Aorta (tissue), 5 donors: ENCODE measurements at regions of chr2 and their contacts with region 1.

Region 1: DNA sequence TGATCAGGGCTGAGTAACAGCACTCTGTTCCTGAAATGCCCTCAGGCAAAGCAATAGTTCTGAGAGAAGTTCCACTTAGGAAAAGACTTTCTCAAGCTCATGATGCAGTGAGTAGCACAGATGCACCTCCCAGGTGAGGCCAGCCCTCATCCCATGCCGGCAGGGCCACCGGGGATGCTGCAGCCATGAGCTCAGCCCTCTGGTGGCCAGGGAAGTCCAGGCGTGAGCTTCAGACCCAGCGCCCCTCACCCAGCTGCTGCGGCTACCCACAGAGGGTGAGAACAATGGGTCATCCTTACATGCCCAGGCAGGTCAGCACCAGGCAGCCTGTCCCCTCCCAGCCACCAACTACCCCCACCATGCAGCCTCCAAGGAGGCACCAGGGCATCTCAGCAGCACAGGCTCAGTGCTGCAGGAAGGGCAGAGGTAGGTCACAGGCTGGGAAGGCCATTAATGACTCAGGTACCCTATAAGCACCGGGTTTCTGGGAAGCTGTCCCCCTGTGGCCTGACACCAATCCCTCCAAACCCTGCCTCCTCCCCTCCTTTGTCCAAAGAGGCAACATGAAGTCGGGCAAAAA is 50.6 kb downstream of the TTC32 start:
- DNase-seq: no peak
- ATAC-seq: no peak
- H3K4me3 ChIP-seq: no peak overlapping the region
- H3K27ac ChIP-seq: no peak overlapping the region
- H3K4me1 ChIP-seq: peaks cover 0 to 4% of the 10 kb centered on the region in 2 donors
- H3K27me3 ChIP-seq: no peaks in the 10 kb centered on the region

Region 2: GRCh38 chr2:19554520-19554919 is 296.7 kb before region 1 on chr2:
- intact Hi-C with region 1: loop called in 1 of 2 experiments (anchors 10 kb)
- DNase-seq: no peak
- ATAC-seq: no peak
- H3K4me3 ChIP-seq: no peak overlapping the region
- H3K27ac ChIP-seq: no peak overlapping the region
- H3K4me1 ChIP-seq: peaks cover 0 to 12% of the 10 kb centered on the region in 2 donors
- H3K27me3 ChIP-seq: no peaks in the 10 kb centered on the region

Region 3: DNA sequence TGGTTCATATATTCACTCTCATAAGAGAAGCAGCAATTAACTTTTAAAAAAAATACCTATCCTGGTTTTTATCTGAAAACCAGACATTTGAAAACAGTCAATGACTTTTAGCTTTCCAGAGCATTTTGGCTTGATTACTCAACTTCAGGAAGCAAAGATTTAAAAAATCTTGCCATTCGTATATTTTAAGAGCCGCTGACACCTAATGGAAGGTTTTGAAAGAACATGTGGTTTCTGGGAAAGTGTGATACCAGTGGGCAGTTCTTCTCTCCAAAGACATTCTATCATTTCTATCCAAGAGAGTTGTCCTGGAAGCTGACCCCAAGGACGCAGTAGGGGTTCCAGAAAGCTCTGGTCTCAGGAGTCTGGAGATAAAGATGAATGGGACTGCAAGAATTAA is 184.1 kb before region 1 on chr2:
- intact Hi-C with region 1: loop called (anchors 5 to 10 kb)
- DNase-seq: no peak
- ATAC-seq: no peak
- H3K4me3 ChIP-seq: no peak overlapping the region
- H3K27ac ChIP-seq: no peak overlapping the region
- H3K4me1 ChIP-seq: peaks cover 0 to 2% of the 10 kb centered on the region in 2 donors
- H3K27me3 ChIP-seq: no peaks in the 10 kb centered on the region

Region 4: DNA sequence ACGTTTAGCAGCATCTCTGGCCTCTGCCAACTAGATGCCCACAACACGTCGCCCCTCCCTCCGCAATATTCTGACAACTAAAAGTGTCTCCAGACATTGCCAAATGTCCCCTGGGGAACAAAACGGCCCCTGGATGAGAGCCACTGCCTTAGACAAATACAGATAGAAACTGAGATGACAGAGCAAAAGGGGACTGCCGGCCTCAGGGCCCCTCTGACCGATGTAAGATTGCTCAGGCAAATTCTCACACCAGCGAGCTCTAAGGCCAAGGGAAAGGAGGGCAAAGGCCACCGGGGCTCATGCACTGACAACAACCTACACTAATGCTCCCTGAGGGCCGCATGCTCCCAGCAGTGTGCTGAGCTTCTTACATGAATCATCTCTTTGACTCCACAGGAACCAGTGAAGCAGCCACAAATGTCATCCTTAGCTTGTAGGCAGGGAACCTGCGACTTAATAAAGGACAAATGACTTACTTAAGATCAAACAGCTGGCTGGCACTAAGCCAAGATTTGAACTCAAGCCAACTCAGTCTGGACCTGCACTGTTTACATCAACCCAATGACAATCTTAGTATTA is 177.9 kb before region 1 on chr2:
- intact Hi-C with region 1: loop called (anchors 5 to 10 kb)
- DNase-seq: no peak
- ATAC-seq: no peak
- H3K4me3 ChIP-seq: no peak overlapping the region
- H3K27ac ChIP-seq: no peak overlapping the region
- H3K4me1 ChIP-seq: peaks cover 0 to 2% of the 10 kb centered on the region in 2 donors
- H3K27me3 ChIP-seq: no peaks in the 10 kb centered on the region

Region 5: DNA sequence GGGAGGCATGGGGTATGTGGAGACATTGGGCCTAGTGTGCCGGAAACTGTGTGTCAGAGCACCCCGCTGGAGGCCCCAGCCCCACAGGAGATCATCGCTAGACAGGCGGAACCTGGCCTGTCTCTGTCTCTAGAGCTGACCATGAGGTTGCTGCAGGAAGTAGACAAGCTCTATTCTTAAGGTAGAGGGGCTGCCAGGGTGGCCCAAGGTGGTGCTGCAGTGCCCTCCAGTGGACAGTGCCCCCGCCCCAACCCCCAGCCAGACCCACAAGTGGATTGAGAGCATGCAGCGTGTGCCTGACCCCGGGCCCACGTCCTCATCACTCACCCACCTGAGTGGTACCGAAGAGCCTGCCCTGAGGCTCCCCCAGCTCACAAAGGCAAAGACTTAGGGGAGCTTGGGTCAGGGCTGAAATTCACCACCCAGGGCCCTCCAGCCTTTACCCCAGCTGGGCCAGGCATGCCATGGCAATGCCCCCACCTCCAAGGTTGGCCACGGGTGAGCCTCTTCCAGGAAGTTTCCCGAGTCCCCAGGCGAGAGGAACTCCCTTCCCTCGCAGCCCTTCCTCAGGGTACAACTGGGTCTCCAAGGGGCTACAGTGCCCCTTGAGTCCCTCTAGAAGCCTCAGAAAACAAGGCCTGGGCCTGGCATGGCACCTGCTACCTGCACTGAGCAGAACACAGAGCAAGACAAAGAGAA is 104.4 kb before region 1 on chr2:
- intact Hi-C with region 1: loop called (anchors 5 to 10 kb)
- DNase-seq: no peak
- ATAC-seq: peak; percentile 33
- H3K4me3 ChIP-seq: no peak overlapping the region
- H3K27ac ChIP-seq: peak overlapping the region; percentile 73 to 87
- H3K4me1 ChIP-seq: peaks cover 0 to 6% of the 10 kb centered on the region in 2 donors
- H3K27me3 ChIP-seq: no peaks in the 10 kb centered on the region

Region 6: DNA sequence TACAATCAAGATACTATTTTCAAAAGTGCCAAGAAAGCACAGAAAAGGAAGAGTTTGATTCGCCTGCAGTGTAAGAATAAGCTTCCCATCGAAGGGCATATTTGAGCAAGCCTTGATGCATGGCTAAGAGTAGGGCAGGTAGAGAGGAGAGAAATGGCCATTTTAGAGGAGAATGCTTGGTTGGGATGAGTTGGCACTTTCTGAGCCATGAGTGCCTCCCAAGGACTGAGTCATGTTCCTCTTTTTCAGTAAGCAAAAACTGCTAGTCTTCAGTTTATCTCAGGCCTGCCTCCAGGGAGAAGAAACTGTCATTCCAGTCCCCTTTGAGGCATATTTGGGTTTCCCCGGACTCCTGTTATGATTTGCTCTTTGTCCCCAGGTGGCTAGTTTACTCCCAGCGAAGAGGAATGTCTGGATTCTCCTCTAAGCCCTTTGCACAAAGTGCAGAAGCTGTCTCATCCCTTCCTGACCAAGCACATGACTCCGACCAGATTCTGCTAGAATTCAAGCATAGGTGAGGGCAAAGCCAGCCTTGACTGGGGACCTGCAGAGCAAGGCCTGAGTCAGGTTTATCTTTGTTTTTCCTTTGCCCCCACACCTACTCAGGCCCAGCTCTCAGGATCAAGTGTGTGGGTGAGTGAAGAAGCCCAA is 64.7 kb before region 1 on chr2:
- intact Hi-C with region 1: loop called in 1 of 2 experiments (anchors 5 kb)
- DNase-seq: no peak
- ATAC-seq: peak; percentile 63
- H3K4me3 ChIP-seq: no peak overlapping the region
- H3K27ac ChIP-seq: peak overlapping the region in 1 of 2 donors; percentile 34
- H3K4me1 ChIP-seq: peaks cover 0 to 8% of the 10 kb centered on the region in 2 donors
- H3K27me3 ChIP-seq: no peaks in the 10 kb centered on the region

Region 7: DNA sequence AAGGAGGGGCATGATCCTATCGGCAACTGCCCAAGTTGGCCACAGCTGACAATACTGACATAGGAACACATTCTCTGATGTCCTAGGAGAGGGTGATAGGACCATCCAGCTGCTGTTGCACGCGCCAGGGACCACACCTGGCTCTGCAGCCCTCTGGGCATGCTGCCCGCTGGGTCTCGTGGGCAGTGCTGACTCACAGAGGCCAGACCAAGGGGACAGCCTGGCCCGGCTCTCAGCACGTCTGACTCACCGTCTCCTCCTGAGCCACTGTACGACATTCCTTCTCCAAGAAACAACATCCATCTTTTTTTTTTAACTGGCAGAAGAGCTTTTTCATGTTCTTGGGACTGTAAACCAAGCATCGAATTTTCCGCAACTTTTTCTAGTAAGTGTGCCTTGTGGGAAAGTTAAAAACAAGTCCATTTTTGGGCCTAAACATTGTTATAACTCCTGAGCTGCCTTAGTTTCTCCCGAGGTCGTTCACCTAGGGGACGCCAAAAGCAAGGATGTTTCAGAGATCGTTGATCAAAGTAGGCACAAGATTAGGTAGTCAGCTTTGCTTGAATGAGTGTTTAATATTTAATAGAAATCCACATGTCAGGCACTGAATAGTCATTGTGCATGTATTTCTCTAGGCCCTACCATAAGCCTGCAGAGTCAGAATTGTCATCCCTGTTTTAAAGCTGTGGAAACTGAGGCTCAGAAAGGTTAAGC is 49.7 kb before region 1 on chr2:
- intact Hi-C with region 1: loop called (anchors 5 kb)
- DNase-seq: peak; percentile 94 to 97
- ATAC-seq: peak; percentile 88
- H3K4me3 ChIP-seq: no peak overlapping the region
- H3K27ac ChIP-seq: peak overlapping the region; percentile 94 to 99
- H3K4me1 ChIP-seq: no peaks in the 10 kb centered on the region
- H3K27me3 ChIP-seq: no peaks in the 10 kb centered on the region